AG04449 (cell line): ENCODE measurements at regions of chr1 and their contacts with region 1.

Region 1: DNA sequence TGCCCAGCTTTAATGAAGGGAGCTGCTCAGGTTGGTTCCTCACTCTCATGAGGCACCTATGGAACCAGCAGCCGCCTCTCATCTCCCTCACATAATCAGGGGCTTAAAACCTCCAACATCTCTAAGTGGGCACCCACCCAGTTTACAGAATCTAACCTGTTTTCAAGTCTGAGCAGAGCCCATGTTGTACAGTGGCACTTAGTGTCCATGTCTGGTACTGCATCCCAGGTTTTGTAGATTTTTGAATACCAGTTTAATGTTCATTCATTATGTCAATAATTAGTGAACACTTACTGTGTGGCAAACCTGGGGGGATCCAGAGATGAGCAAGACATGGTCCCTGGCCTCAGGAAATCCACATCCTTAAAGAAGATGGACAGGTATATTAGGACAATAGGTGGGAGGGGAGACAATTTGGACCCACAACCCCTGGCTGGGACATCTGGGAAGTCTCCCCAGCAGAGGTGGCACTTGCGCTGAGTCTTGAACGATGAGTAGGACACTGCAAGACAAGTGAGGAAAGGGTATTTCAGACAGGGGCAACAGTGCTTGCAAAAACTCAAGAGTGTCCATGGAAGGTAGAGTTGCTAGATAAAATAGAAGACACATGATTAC is 83.3 kb downstream of the LACTBL1 start:
- DNase-seq: no peak
- H3K4me3 ChIP-seq: no peak overlapping the region
- CTCF ChIP-seq: peak; percentile 71

Region 2: GRCh38 chr1:22673486-22674409 is 215.6 kb before region 1 on chr1:
- CTCF ChIA-PET with region 1: interaction called, 103 read pairs
- POLR2A ChIA-PET with region 1: no interaction called
- DNase-seq: peak; percentile 7
- H3K4me3 ChIP-seq: no peak overlapping the region
- CTCF ChIP-seq: peak; percentile 75

Region 3: DNA sequence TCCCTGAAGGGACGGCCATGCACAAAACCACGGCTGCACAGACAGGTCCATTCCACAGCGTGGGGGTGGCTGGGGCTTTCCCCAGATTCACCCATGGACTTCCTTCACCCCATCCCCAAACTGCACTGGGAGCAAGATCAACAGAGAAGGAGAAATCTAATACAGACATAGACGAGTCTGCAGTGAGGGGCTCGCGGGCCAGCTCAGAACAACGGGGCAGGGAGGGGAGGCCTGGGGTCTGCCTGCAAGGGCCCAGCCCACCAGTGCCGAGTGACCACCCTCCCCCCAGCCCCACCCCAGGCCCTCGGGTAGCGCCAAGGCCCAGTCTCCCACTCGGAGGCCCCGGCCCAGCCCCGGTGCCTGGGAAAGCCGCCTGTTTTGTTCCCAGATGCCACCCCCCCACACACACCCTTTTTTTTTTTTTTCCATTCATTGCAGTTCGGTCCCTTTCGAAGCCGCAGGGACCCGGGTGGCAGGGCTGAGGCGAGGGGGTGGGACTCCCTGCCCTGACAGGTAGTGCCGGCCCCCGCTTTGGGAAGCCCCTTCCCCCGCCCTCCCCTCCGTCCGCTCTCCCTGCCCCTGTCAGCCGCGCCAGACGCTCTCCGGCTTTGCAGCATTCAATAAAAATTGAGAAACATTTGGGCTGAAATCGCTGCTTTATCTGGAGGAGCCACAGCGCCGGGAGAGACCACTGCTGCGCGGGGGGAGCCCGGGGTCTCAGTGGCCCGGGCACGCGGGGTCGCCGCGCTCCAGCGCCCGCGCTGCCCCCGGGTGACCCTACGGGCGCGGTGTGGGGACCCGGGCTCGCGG is 179.2 kb before region 1 on chr1:
- CTCF ChIA-PET with region 1: interaction called, 144 read pairs
- POLR2A ChIA-PET with region 1: no interaction called
- DNase-seq: no peak
- H3K4me3 ChIP-seq: peak overlapping the region; percentile 60
- CTCF ChIP-seq: no peak

Region 4: DNA sequence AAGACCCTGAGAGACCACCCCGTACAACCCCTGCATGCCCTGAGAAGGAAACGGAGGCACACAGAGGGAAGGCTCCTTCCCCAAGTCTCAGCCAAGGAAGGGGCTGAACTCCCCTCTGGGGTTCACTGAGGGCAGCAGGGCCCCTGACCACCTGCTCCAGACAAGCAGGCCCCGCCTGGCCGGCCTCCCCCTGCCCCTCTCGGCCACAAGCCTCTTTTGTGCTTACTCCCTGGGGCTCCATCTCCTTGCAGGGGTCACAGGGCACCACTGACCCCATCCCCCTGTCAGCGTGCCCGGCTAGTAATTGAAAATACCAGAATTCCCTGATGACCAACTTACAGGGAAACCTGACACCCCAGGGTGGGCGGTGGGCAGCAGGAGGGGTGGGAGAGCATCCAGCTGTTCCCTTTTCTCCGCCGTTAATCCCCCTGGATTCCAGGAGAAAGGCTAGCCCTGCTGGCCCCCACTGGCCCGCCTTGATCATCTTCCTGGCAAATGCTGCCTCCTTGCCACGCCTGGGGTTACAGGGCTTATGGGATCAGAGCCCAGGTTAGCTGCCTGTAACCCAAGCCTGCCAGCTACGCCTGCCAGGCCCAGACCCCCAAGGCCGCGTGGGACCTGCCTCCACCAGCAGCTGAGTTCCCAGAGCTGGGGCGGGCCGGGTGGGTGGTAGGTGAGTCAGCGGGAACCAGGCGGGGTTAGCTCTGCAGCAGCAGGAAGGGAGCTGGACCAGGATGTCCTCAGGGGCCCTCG is 12.8 kb before region 1 on chr1:
- CTCF ChIA-PET with region 1: interaction called, 20 read pairs
- POLR2A ChIA-PET with region 1: no interaction called
- DNase-seq: no peak
- H3K4me3 ChIP-seq: no peak overlapping the region
- CTCF ChIP-seq: no peak